Psoas muscle (tissue), 8 donors: ENCODE measurements at regions of chr3 and their contacts with region 1.

Region 1: GRCh38 chr3:122514123-122515019 is at the start of gene KPNA1:
- DNase-seq: peak; percentile 89 to 93
- ATAC-seq: peak; percentile 90 to 93 (median 92)
- H3K4me3 ChIP-seq: peak within 1 kb of the TSS; percentile 95
- H3K27ac ChIP-seq: peak within 1 kb of the TSS; percentile 100
- H3K4me1 ChIP-seq: peaks cover 43% of the 10 kb centered on the region
- H3K27me3 ChIP-seq: no peaks in the 10 kb centered on the region
- CTCF ChIP-seq: no peak
- total RNA-seq, gene KPNA1: 180 to 263 (median 233) TPM

Region 2: DNA sequence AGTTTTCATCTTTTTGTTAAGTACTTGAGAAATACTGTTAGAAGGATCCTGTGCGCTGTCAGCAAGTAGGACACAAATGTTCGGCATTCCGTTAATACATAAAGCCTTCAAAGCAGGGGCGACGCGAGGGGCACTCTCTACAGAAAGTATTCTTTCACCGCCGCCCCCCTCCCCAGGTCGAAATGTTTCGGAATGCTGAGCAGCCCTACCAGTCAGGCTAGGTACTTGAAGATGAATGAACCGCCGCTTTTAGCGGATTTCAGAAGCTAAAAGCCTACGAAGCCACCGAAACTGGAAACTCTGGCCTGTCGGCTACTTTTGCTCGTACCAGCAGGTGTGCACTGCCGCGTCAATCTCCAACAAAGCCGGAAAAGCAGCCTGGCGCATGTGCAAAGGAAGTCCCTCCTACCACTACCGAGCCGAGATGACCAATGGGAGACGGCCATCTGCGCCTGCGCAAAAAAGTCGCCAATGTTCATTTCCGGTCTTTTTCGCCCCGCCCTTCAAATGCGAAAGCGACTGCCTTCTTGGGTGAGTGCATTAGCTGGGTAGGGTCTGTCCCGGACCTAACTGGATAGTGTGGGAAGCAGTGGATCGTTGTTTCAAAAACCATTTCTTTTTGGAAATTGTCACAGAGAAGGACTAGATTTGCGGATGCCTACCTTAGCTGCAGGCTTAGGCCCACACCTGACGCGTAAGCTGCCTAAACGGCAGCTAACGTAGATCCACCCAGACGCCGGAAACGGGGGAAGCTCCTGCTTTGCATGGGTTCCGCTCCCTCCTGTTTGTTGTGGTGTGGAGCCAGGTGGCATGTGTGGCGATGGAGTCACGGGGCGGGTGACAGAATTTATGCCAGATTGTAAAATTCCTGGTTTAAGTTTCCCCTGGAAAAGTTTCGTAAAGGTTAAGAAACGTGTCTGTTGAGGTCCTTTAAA is 98.4 kb before region 1 on chr3 and contains the start of gene WDR5B:
- intact Hi-C with region 1: loop called in 1 of 2 experiments (anchors 5 kb)
- DNase-seq: peak; percentile 97 to 99
- ATAC-seq: peak; percentile 93 to 95 (median 94)
- H3K4me3 ChIP-seq: peak within 1 kb of the TSS; percentile 76
- H3K27ac ChIP-seq: peak within 1 kb of the TSS; percentile 94
- H3K4me1 ChIP-seq: peaks cover 35% of the 10 kb centered on the region
- H3K27me3 ChIP-seq: no peaks in the 10 kb centered on the region
- CTCF ChIP-seq: peak; percentile 12
- total RNA-seq, gene WDR5B: 1.8 to 4.0 (median 3.3) TPM